ENCODE measurements at regions of chr2 and their contacts with region 1.

Region 1: GRCh38 chr2:16756831-16757644 is 91.4 kb upstream of the CYRIA start:
- DNase-seq: peak; percentile 68 to 80 (median 79)
- ATAC-seq: peak; percentile 98 to 100 (median 98)
- H3K4me3 ChIP-seq: no peak overlapping the region
- H3K27ac ChIP-seq: no peak overlapping the region
- H3K4me1 ChIP-seq: peaks cover 0 to 7% (median 0%) of the 10 kb centered on the region in 4 donors
- H3K27me3 ChIP-seq: no peaks in the 10 kb centered on the region
- CTCF ChIP-seq: peak; percentile 87 to 92 (median 89)
- POLR2A ChIP-seq: no peak

Region 2: DNA sequence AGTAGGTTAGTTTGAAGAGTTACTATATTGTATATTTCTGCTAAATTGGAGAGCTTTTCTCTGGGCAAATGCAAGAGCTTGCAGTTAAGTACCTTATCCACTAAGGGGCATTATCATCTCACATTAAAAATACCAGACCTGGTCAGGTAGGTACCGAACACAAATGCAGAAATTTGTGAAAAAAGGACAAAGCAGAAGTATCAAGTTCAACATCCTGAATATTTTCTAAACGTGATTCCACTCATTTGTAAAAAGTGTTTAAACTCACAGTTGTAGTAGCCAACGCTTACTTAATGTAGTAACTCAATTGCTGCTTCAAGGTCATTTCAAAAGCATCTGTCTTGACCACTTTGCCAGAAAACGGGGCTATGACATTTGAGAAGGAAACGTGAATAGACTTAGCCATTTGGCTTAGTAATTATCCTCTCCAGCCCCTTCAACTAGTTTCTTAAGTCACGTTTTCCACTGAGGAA is 143.5 kb before region 1 on chr2:
- intact Hi-C with region 1: loop called (anchors 2 to 5 kb)
- DNase-seq: no peak
- ATAC-seq: peak; percentile 40 to 50 (median 46)
- H3K4me3 ChIP-seq: no peak overlapping the region
- H3K27ac ChIP-seq: no peak overlapping the region
- H3K4me1 ChIP-seq: peaks cover 0 to 13% (median 3%) of the 10 kb centered on the region in 4 donors
- H3K27me3 ChIP-seq: no peaks in the 10 kb centered on the region
- CTCF ChIP-seq: peak; percentile 53 to 69 (median 60)
- POLR2A ChIP-seq: no peak

Region 3: GRCh38 chr2:16948053-16948452 is 191.0 kb after region 1 on chr2:
- intact Hi-C with region 1: no loop called
- DNase-seq: no peak
- ATAC-seq: no peak
- H3K4me3 ChIP-seq: no peak overlapping the region
- H3K27ac ChIP-seq: no peak overlapping the region
- H3K4me1 ChIP-seq: peaks cover 0 to 12% (median 0%) of the 10 kb centered on the region in 4 donors
- H3K27me3 ChIP-seq: no peaks in the 10 kb centered on the region
- CTCF ChIP-seq: no peak
- POLR2A ChIP-seq: no peak

Measured in right lobe of liver (tissue), 6 donors.